B cell (primary cell): ENCODE measurements at regions of chr7 and their contacts with region 1.

Region 1: GRCh38 chr7:74254129-74254857 is at the start of gene RFC2:
- DNase-seq: peak; percentile 97
- ATAC-seq: peak; percentile 97
- H3K4me3 ChIP-seq: peak within 1 kb of the TSS; percentile 72 to 99 (median 91)
- H3K4me3 Mint-ChIP-seq: peak within 1 kb of the TSS; percentile 97
- H3K27ac ChIP-seq: peak within 1 kb of the TSS; percentile 66 to 90
- H3K27ac Mint-ChIP-seq: peak within 1 kb of the TSS; percentile 95
- H3K4me1 ChIP-seq: peaks cover 16 to 44% of the 10 kb centered on the region in 2 donors
- H3K4me1 Mint-ChIP-seq: peaks cover 30% of the 10 kb centered on the region
- H3K27me3 ChIP-seq: no peaks in the 10 kb centered on the region
- H3K27me3 Mint-ChIP-seq: no peaks in the 10 kb centered on the region
- CTCF ChIP-seq: peak; percentile 29
- total RNA-seq, gene RFC2: 33.2 and 36.4 TPM in 2 replicates

Region 2: GRCh38 chr7:74236284-74236683 is 18.0 kb before region 1 on chr7:
- CTCF ChIA-PET with region 1: interaction called, 6 read pairs
- POLR2A ChIA-PET with region 1: interaction called, 3 read pairs
- intact Hi-C with region 1: loop called (anchors 1 kb)
- DNase-seq: no peak
- ATAC-seq: no peak
- H3K4me3 ChIP-seq: no peak overlapping the region
- H3K4me3 Mint-ChIP-seq: no peak overlapping the region
- H3K27ac ChIP-seq: no peak overlapping the region
- H3K27ac Mint-ChIP-seq: peak overlapping the region; percentile 41
- H3K4me1 ChIP-seq: peaks cover 37 to 57% of the 10 kb centered on the region in 2 donors
- H3K4me1 Mint-ChIP-seq: peaks cover 37% of the 10 kb centered on the region
- H3K27me3 ChIP-seq: no peaks in the 10 kb centered on the region
- H3K27me3 Mint-ChIP-seq: no peaks in the 10 kb centered on the region
- CTCF ChIP-seq: no peak

Region 3: GRCh38 chr7:74272305-74273038 is 18.2 kb after region 1 on chr7:
- CTCF ChIA-PET with region 1: interaction called, 4 read pairs
- POLR2A ChIA-PET with region 1: no interaction called
- intact Hi-C with region 1: loop called (anchors 1 kb)
- DNase-seq: peak; percentile 65
- ATAC-seq: peak; percentile 70
- H3K4me3 ChIP-seq: peak overlapping the region in 2 of 5 experiments; percentile 5 to 18
- H3K4me3 Mint-ChIP-seq: peak overlapping the region; percentile 85
- H3K27ac ChIP-seq: no peak overlapping the region
- H3K27ac Mint-ChIP-seq: peak overlapping the region; percentile 87
- H3K4me1 ChIP-seq: peaks cover 16 to 44% of the 10 kb centered on the region in 2 donors
- H3K4me1 Mint-ChIP-seq: peaks cover 39% of the 10 kb centered on the region
- H3K27me3 ChIP-seq: no peaks in the 10 kb centered on the region
- H3K27me3 Mint-ChIP-seq: no peaks in the 10 kb centered on the region
- CTCF ChIP-seq: no peak

Region 4: DNA sequence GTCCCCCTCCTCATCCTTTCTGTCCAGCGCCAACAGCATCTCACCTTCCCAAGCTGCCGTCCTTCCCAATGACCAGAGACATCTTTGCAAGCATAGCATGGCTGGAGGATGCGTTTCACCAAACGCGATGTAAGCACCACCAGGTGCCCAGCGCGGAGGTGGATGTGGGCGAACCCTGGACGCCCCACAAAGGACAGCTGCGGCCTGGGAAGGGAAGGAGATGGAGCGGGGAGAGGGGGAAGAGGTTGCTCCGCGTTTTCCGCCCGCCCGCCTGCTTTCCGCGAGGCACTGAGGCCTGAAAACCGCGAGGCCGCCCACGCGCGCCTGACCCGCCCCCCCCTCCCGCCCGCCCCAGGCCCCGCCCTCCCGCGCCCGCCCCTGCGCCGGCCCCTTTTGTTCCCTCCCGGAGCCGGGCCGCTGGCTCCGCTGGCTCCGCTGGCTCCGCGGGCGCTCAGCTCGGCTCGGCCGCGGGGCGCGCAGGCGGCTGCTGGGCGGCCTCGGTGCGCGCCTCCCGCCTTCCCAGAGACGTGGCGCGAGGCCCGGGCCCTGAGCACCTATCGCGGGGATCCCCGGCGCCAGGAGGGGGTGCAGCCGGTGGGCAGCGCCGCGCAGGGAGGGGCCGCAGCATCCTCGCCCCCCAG is 34.8 kb after region 1 on chr7 and contains the start of gene CLIP2:
- CTCF ChIA-PET with region 1: interaction called, 3 read pairs
- POLR2A ChIA-PET with region 1: interaction called, 4 read pairs
- intact Hi-C with region 1: loop called (anchors 1 kb)
- DNase-seq: peak; percentile 85
- ATAC-seq: peak; percentile 74
- H3K4me3 ChIP-seq: peak within 1 kb of the TSS; percentile 34 to 73 (median 61)
- H3K4me3 Mint-ChIP-seq: peak within 1 kb of the TSS; percentile 96
- H3K27ac ChIP-seq: peak within 1 kb of the TSS; percentile 29 to 62
- H3K27ac Mint-ChIP-seq: peak within 1 kb of the TSS; percentile 93
- H3K4me1 ChIP-seq: peaks cover 32 to 47% of the 10 kb centered on the region in 2 donors
- H3K4me1 Mint-ChIP-seq: peaks cover 58% of the 10 kb centered on the region
- H3K27me3 ChIP-seq: no peaks in the 10 kb centered on the region
- H3K27me3 Mint-ChIP-seq: no peaks in the 10 kb centered on the region
- CTCF ChIP-seq: no peak
- total RNA-seq, gene CLIP2: 47.9 and 49.5 TPM in 2 replicates

Region 5: GRCh38 chr7:74598558-74598957 is 344.3 kb after region 1 on chr7:
- CTCF ChIA-PET with region 1: no interaction called
- POLR2A ChIA-PET with region 1: no interaction called
- intact Hi-C with region 1: no loop called
- DNase-seq: no peak
- ATAC-seq: no peak
- H3K4me3 ChIP-seq: no peak overlapping the region
- H3K4me3 Mint-ChIP-seq: no peak overlapping the region
- H3K27ac ChIP-seq: no peak overlapping the region
- H3K27ac Mint-ChIP-seq: no peak overlapping the region
- H3K4me1 ChIP-seq: no peaks in the 10 kb centered on the region
- H3K4me1 Mint-ChIP-seq: no peaks in the 10 kb centered on the region
- H3K27me3 ChIP-seq: peaks cover 0 to 2% (median 0%) of the 10 kb centered on the region in 4 experiments
- H3K27me3 Mint-ChIP-seq: no peaks in the 10 kb centered on the region
- CTCF ChIP-seq: no peak